Activated B cell treated with CpG ODN at 0.5 μM for 24 hours (primary cell): ENCODE measurements at regions of chr16 and their contacts with region 1.

Region 1: DNA sequence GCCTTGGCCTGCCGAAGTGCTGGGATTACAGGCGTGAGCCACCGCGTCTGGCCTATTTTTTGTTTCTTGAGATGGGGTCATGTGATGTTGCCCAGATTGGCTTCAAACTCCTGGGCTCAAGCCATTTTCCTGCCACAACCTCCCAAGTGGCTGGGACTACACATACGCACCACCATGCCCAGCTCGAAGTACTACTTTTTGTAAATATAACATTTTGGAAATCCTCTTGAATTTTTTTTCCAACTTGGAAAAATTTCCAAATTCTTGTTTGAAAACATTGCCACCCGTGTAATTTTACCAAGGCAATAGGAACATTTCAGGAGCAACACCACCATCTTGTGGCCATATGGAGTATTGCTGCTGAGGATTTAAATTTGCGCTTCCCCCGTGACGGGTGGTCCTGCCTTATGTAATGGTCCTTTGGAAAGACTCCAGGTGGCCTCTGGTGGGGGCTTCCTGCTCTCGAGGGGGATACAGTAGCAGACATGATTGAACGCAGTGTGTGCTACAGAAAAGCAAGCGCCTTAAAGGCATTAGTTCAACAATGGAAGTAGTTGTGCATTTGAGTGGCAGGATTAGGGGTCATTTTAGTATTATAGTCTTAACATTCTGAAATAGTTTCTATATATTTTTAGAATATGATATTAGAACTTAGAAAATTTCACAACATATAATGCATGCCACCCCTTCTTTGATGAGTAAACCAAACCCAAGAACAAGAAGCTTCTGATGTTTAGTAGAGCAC is 8.0 kb downstream of the FLYWCH1 start:
- DNase-seq: no peak
- ATAC-seq: peak; percentile 80
- H3K4me3 Mint-ChIP-seq: no peak overlapping the region
- H3K27ac Mint-ChIP-seq: no peak overlapping the region
- H3K4me1 Mint-ChIP-seq: peaks cover 4% of the 10 kb centered on the region
- H3K27me3 Mint-ChIP-seq: no peaks in the 10 kb centered on the region
- CTCF ChIP-seq: peak; percentile 89

Region 2: DNA sequence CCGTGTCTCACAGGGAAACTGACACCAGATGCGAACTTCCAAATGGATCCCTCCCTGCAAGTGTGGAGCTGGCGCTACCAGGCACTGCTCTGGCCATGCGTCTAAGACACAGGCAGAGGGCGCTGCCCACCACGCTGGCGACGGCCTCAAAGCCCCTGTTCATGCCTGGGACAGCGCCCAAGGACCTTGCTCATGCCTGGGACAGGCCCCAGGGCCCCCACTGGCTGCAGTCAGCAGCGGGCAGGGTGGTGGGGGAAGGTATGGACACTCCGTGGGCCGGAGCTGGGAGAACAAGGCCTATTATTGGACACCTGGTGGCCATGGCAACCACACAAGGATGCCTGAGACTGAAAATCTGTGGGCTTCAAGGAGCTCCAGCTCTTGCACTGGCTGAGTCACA is 80.8 kb before region 1 on chr16:
- CTCF ChIA-PET with region 1: interaction called, 5 read pairs
- POLR2A ChIA-PET with region 1: no interaction called
- intact Hi-C with region 1: loop called (anchors 1 kb)
- DNase-seq: no peak
- ATAC-seq: peak; percentile 54
- H3K4me3 Mint-ChIP-seq: no peak overlapping the region
- H3K27ac Mint-ChIP-seq: no peak overlapping the region
- H3K4me1 Mint-ChIP-seq: peaks cover 15% of the 10 kb centered on the region
- H3K27me3 Mint-ChIP-seq: peaks cover 28% of the 10 kb centered on the region
- CTCF ChIP-seq: no peak

Region 3: DNA sequence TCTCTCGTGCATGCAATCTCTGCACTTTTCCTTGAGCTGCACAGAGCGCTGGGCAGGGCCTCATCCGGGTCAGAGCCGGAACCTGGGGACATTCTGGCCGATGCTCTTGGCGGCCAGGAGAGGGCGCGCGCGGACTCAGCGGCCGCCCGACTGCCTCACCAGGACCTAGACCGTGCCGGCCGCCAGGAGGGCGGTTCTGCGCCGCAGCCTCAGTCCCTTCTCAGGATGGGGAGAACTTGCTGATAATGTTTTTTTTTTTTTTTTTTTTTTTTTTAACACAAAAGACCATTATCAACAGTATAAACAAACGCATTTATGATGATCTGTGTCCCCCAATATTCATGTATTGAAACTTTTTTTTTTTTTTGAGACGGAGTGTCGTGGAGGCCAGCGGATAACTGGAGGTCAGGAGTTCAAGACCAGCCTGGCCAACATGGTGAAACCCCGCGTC is 44.7 kb before region 1 on chr16:
- CTCF ChIA-PET with region 1: interaction called, 12 read pairs
- POLR2A ChIA-PET with region 1: no interaction called
- intact Hi-C with region 1: loop called (anchors 1 kb)
- DNase-seq: peak; percentile 51
- ATAC-seq: peak; percentile 100
- H3K4me3 Mint-ChIP-seq: no peak overlapping the region
- H3K27ac Mint-ChIP-seq: no peak overlapping the region
- H3K4me1 Mint-ChIP-seq: no peaks in the 10 kb centered on the region
- H3K27me3 Mint-ChIP-seq: peaks cover 1% of the 10 kb centered on the region
- CTCF ChIP-seq: peak; percentile 54

Region 4: DNA sequence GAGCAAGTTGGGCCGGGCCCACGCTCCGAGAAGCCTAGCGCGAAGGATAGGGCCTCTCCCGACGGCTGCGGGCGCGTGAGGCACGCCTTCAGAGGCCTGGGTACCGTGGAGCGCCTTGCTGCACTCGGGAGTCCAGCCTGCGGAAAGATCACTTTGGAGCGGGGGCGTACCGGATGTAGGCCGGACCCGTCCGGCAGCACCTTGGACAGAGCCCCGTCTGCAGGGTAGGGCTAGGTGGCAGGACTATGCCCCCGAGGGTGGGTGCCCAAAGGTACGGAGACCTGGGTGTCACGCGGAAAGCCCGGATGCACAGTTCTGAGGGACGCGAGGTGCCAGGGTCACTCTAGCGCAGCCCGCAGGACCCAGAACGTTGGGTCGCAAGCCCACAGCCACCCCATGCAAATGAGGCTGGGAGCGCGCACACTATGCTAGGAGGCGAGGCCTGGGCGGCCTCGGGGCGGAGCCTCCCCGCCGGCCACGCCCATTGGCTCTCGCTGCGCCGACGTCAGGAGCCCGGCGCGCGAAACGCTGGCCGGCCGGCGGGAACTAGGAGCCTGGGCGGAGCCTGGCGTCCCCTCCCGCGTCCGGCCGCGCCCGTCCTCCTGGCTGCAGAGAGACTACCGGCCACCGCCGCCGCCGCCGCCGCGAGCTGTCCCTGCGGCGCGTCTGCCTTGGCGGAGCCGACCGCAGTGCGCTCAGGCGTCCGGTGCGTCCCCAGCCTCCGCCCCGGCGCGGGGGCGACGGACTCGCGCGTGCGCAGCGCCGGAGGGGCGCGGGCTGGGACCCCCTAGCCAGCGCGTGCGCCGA is 49.3 kb after region 1 on chr16 and contains the start of gene PAQR4:
- CTCF ChIA-PET with region 1: no interaction called
- POLR2A ChIA-PET with region 1: no interaction called
- intact Hi-C with region 1: no loop called
- DNase-seq: peak; percentile 86
- ATAC-seq: peak; percentile 80
- H3K4me3 Mint-ChIP-seq: peak within 1 kb of the TSS; percentile 77
- H3K27ac Mint-ChIP-seq: peak within 1 kb of the TSS; percentile 18
- H3K4me1 Mint-ChIP-seq: peaks cover 24% of the 10 kb centered on the region
- H3K27me3 Mint-ChIP-seq: peaks cover 12% of the 10 kb centered on the region
- CTCF ChIP-seq: no peak
- total RNA-seq, gene PAQR4: 2.4 and 2.7 TPM in 2 replicates